CD8-positive, alpha-beta T cell (primary cell): ENCODE measurements at regions of chr3 and their contacts with region 1.

Region 1: GRCh38 chr3:17983106-17983505 is 240.7 kb upstream of the TBC1D5 start:
- DNase-seq: no peak
- ATAC-seq: no peak
- H3K4me3 ChIP-seq: no peak overlapping the region
- H3K4me3 Mint-ChIP-seq: no peak overlapping the region
- H3K27ac ChIP-seq: no peak overlapping the region
- H3K27ac Mint-ChIP-seq: no peak overlapping the region
- H3K4me1 ChIP-seq: no peaks in the 10 kb centered on the region
- H3K4me1 Mint-ChIP-seq: no peaks in the 10 kb centered on the region
- H3K27me3 ChIP-seq: peaks cover 0 to 3% of the 10 kb centered on the region in 2 experiments
- H3K27me3 Mint-ChIP-seq: peaks cover 2% of the 10 kb centered on the region
- CTCF ChIP-seq: no peak

Region 2: DNA sequence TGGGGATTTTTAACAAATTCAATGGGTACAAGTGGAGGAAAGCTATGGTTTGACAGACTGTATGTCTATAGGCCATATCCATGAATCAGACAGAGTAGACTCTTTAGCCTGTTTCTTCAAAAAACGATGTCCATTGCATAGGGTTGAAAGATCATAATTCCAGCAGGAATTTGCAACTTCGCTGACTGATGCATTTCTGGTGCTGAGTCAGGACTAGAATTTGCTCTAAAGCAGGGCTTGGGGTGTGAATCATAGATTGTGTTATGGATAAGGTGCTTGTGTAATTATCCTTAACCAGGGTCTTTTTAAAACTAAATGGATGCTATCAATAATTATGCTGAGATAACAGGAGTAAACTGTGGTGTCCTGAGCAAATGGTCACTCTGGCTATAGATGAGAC is 40.2 kb before region 1 on chr3:
- CTCF ChIA-PET with region 1: no interaction called
- POLR2A ChIA-PET with region 1: no interaction called
- intact Hi-C with region 1: loop called in 1 of 2 experiments (anchors 1 kb)
- DNase-seq: no peak
- ATAC-seq: no peak
- H3K4me3 ChIP-seq: no peak overlapping the region
- H3K4me3 Mint-ChIP-seq: no peak overlapping the region
- H3K27ac ChIP-seq: no peak overlapping the region
- H3K27ac Mint-ChIP-seq: no peak overlapping the region
- H3K4me1 ChIP-seq: no peaks in the 10 kb centered on the region
- H3K4me1 Mint-ChIP-seq: no peaks in the 10 kb centered on the region
- H3K27me3 ChIP-seq: no peaks in the 10 kb centered on the region
- H3K27me3 Mint-ChIP-seq: peaks cover 2% of the 10 kb centered on the region
- CTCF ChIP-seq: no peak